Activated CD8-positive, alpha-beta T cell treated with anti-CD3 and anti-CD28 coated beads, Interleukin-2, amount 10 ng/mL, durations not matched to agents 7 days and 5 days (primary cell): ENCODE measurements at regions of chr21 and their contacts with region 1.

Region 1: GRCh38 chr21:25385911-25386474 is 221.3 kb downstream of the MRPL39 start:
- DNase-seq: no peak
- ATAC-seq: peak; percentile 65
- H3K4me3 Mint-ChIP-seq: no peak overlapping the region
- H3K27ac Mint-ChIP-seq: no peak overlapping the region
- H3K4me1 Mint-ChIP-seq: peaks cover 8% of the 10 kb centered on the region
- H3K27me3 Mint-ChIP-seq: peaks cover 11% of the 10 kb centered on the region

Region 2: GRCh38 chr21:25283720-25284119 is 102.3 kb before region 1 on chr21:
- CTCF ChIA-PET with region 1: interaction called, 15 read pairs
- POLR2A ChIA-PET with region 1: no interaction called
- DNase-seq: no peak
- ATAC-seq: no peak
- H3K4me3 Mint-ChIP-seq: no peak overlapping the region
- H3K27ac Mint-ChIP-seq: no peak overlapping the region
- H3K4me1 Mint-ChIP-seq: no peaks in the 10 kb centered on the region
- H3K27me3 Mint-ChIP-seq: peaks cover 9% of the 10 kb centered on the region

Region 3: DNA sequence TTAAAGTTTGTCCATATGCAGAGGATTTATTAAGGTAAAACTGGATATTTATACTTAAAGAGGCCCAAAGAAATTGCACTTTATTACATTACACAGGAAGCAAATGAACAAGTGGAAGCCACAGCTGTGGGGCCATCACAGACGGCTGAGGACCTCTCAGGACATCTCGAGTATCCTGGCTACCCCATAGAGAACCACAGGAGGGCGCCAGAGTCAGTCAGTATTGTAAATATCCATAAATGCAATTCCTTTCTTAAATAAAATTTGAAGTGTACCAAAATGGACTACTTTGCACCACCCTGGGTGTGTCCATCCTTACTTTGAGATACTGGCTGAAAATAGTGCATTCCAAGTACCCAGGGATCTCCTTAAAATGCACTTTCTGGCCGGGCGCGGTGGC is 35.9 kb before region 1 on chr21:
- CTCF ChIA-PET with region 1: interaction called, 18 read pairs
- POLR2A ChIA-PET with region 1: no interaction called
- DNase-seq: peak; percentile 42
- ATAC-seq: peak; percentile 55
- H3K4me3 Mint-ChIP-seq: no peak overlapping the region
- H3K27ac Mint-ChIP-seq: no peak overlapping the region
- H3K4me1 Mint-ChIP-seq: no peaks in the 10 kb centered on the region
- H3K27me3 Mint-ChIP-seq: peaks cover 20% of the 10 kb centered on the region

Region 4: DNA sequence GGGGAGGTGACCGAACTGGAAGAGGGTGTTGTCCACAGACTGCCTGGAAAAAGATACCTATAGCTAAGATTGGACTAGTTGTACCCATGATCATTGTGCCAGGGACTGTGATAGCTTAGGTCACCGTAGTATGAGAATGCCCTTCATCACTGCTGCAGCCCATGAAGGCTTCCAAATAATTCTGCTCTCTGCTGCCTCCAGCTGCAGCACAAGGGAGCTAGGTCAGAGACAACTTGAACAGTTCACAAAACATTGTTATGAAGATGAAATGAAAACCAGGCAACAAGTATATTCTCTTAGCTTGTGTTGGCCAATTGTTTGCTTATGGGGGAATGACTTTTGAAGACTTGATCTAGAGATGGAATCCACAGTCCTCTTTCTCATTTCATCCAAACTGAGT is 25.4 kb before region 1 on chr21:
- CTCF ChIA-PET with region 1: interaction called, 11 read pairs
- POLR2A ChIA-PET with region 1: no interaction called
- DNase-seq: no peak
- ATAC-seq: no peak
- H3K4me3 Mint-ChIP-seq: no peak overlapping the region
- H3K27ac Mint-ChIP-seq: no peak overlapping the region
- H3K4me1 Mint-ChIP-seq: no peaks in the 10 kb centered on the region
- H3K27me3 Mint-ChIP-seq: no peaks in the 10 kb centered on the region

Region 5: GRCh38 chr21:25370311-25370744 is 15.7 kb before region 1 on chr21:
- CTCF ChIA-PET with region 1: interaction called, 11 read pairs
- POLR2A ChIA-PET with region 1: no interaction called
- DNase-seq: no peak
- ATAC-seq: no peak
- H3K4me3 Mint-ChIP-seq: no peak overlapping the region
- H3K27ac Mint-ChIP-seq: no peak overlapping the region
- H3K4me1 Mint-ChIP-seq: no peaks in the 10 kb centered on the region
- H3K27me3 Mint-ChIP-seq: peaks cover 7% of the 10 kb centered on the region

Region 6: DNA sequence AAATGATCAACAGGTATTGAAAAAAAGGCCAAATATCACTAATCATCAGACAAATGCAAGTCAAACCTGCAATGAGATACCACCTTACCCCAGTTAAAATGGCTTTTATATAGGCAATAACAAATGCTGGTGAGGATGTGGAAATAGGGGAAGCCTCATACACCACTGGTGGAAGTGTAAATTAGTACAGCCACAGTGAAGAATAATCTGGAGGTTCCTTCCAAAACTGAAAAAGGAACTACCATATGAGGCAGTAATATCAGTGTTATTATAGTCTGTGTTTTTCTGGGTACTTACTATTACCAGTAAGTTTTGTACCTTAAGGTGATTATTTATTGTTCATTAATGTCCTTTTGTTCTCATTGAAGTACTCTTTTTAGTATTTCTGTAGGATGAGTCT is 20.0 kb after region 1 on chr21:
- CTCF ChIA-PET with region 1: no interaction called
- POLR2A ChIA-PET with region 1: no interaction called
- DNase-seq: no peak
- ATAC-seq: no peak
- H3K4me3 Mint-ChIP-seq: no peak overlapping the region
- H3K27ac Mint-ChIP-seq: no peak overlapping the region
- H3K4me1 Mint-ChIP-seq: peaks cover 28% of the 10 kb centered on the region
- H3K27me3 Mint-ChIP-seq: peaks cover 4% of the 10 kb centered on the region

Region 7: GRCh38 chr21:25441835-25442234 is 55.8 kb after region 1 on chr21:
- CTCF ChIA-PET with region 1: no interaction called
- POLR2A ChIA-PET with region 1: no interaction called
- DNase-seq: no peak
- ATAC-seq: no peak
- H3K4me3 Mint-ChIP-seq: no peak overlapping the region
- H3K27ac Mint-ChIP-seq: no peak overlapping the region
- H3K4me1 Mint-ChIP-seq: no peaks in the 10 kb centered on the region
- H3K27me3 Mint-ChIP-seq: no peaks in the 10 kb centered on the region